Sciatic nerve (tissue), 2 donors: ENCODE measurements at regions of chr18 and their contacts with region 1.

Region 1: DNA sequence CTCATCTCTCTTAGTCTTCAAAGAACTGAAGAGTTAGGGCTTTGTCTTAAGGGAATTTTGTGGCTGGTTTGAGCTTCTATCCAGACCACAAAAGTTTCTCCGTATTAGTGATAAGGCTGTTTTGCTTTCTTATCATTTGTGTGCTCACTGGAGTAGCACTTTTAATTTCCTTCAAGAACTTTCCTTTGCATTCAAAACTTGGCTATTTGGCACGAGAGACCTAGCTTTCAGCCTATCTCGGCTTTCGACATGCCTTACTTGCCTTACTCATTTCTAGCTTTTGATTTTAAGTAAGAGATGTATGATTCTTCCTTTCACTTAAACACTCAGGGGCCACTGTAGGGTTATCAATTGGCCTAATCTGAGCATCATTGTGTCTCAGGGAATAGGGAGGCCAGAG is 29.9 kb downstream of the HDHD2 start:
- DNase-seq: no peak
- ATAC-seq: no peak

Region 2: GRCh38 chr18:47077111-47077510 is 43.3 kb before region 1 on chr18:
- intact Hi-C with region 1: loop called (anchors 2 kb)
- DNase-seq: no peak
- ATAC-seq: no peak

Region 3: GRCh38 chr18:47150029-47150823 is 29.8 kb after region 1 on chr18 and contains the start of gene HDHD2:
- intact Hi-C with region 1: no loop called
- DNase-seq: peak; percentile 91
- ATAC-seq: peak; percentile 98
- total RNA-seq, gene HDHD2: 42.7 TPM